GM12878 (cell line): ENCODE measurements at regions of chr6 and their contacts with region 1.

Region 1: DNA sequence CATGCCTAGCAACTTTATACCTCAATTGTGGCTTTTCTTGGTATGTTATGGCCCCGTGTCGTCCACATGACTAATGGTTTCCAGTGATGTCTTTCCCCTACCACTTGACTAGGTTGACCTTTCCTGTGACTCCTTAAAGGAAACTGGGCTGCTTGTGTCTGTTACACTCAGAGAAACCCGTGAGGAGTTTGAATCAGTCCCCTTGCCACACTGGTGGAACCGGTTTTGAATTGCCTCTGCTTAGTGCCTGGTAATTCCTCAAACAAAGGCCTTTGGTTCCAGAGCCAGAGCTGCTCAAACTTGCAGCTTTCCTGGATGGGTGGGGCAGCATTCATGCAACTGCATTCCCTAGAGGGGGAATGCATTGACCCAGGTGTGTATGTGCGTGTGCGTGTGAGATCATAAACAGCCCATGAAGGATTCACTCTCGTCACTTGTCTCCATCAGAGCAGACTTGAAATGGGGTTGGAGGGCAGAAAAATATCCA is 22.0 kb downstream of the ECT2L start:
- DNase-seq: no peak
- ATAC-seq: peak; percentile 51
- H3K4me3 ChIP-seq: no peak overlapping the region
- H3K27ac ChIP-seq: no peak overlapping the region; the same call in 1 of the 2 replicates
- H3K4me1 ChIP-seq: peaks cover 18% of the 10 kb centered on the region
- H3K27me3 ChIP-seq: no peaks in the 10 kb centered on the region
- CTCF ChIP-seq: no peak
- EP300 ChIP-seq: no peak
- POLR2A ChIP-seq: no peak
- RAD21 ChIP-seq: no peak

Region 2: GRCh38 chr6:138622967-138623366 is 194.9 kb before region 1 on chr6:
- CTCF ChIA-PET with region 1: no interaction called
- POLR2A ChIA-PET with region 1: no interaction called
- RAD21 ChIA-PET with region 1: no interaction called
- SMC1A ChIA-PET with region 1: no interaction called
- in situ Hi-C with region 1: no loop called
- intact Hi-C with region 1: no loop called
- DNase-seq: no peak
- ATAC-seq: no peak
- H3K4me3 ChIP-seq: no peak overlapping the region
- H3K27ac ChIP-seq: no peak overlapping the region
- H3K4me1 ChIP-seq: no peaks in the 10 kb centered on the region
- H3K27me3 ChIP-seq: no peaks in the 10 kb centered on the region
- CTCF ChIP-seq: no peak
- EP300 ChIP-seq: no peak
- POLR2A ChIP-seq: no peak
- RAD21 ChIP-seq: no peak

Region 3: DNA sequence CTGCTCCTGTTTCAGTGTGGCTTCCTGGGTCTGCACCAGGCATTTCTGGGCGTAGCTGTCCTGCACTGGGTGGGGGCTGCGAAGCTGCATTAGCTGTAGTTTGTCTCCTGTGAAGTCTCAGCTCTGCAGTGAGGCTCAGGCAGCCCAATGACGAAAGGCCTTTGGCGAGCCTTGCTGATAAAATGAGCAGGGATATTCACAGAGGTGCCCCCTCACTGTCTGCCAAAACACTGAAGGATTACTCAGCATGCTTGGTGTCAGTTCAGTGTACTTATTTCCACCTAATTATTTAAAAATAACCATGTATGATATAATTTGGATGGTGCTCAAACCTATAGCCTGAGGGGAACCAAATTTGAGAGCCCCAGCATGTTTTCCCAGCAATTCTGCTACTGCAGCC is 51.5 kb after region 1 on chr6:
- CTCF ChIA-PET with region 1: interaction called, 3 read pairs
- POLR2A ChIA-PET with region 1: no interaction called
- RAD21 ChIA-PET with region 1: interaction called, 5 read pairs
- SMC1A ChIA-PET with region 1: interaction called, 10 read pairs
- in situ Hi-C with region 1: no loop called
- intact Hi-C with region 1: loop called (anchors 1 kb)
- DNase-seq: no peak
- ATAC-seq: no peak; the same call in 2 of the 3 replicates
- H3K4me3 ChIP-seq: no peak overlapping the region
- H3K27ac ChIP-seq: peak overlapping the region; percentile 34
- H3K4me1 ChIP-seq: peaks cover 21% of the 10 kb centered on the region
- H3K27me3 ChIP-seq: no peaks in the 10 kb centered on the region
- CTCF ChIP-seq: no peak
- EP300 ChIP-seq: no peak
- POLR2A ChIP-seq: no peak
- RAD21 ChIP-seq: no peak

Region 4: GRCh38 chr6:138891255-138891986 is 73.6 kb after region 1 on chr6:
- CTCF ChIA-PET with region 1: interaction called, 7 read pairs
- POLR2A ChIA-PET with region 1: no interaction called
- RAD21 ChIA-PET with region 1: interaction called, 10 read pairs
- SMC1A ChIA-PET with region 1: interaction called, 24 read pairs
- in situ Hi-C with region 1: no loop called
- intact Hi-C with region 1: no loop called
- DNase-seq: no peak
- ATAC-seq: no peak
- H3K4me3 ChIP-seq: no peak overlapping the region
- H3K27ac ChIP-seq: no peak overlapping the region
- H3K4me1 ChIP-seq: peaks cover 12% of the 10 kb centered on the region
- H3K27me3 ChIP-seq: no peaks in the 10 kb centered on the region
- CTCF ChIP-seq: no peak
- EP300 ChIP-seq: no peak
- POLR2A ChIP-seq: no peak
- RAD21 ChIP-seq: no peak

Region 5: GRCh38 chr6:138931660-138932059 is 113.8 kb after region 1 on chr6:
- CTCF ChIA-PET with region 1: interaction called, 21 read pairs
- POLR2A ChIA-PET with region 1: no interaction called
- RAD21 ChIA-PET with region 1: interaction called, 7 read pairs
- SMC1A ChIA-PET with region 1: interaction called, 16 read pairs
- in situ Hi-C with region 1: no loop called
- intact Hi-C with region 1: no loop called
- DNase-seq: no peak
- ATAC-seq: peak; percentile 69
- H3K4me3 ChIP-seq: no peak overlapping the region
- H3K27ac ChIP-seq: no peak overlapping the region
- H3K4me1 ChIP-seq: no peaks in the 10 kb centered on the region
- H3K27me3 ChIP-seq: no peaks in the 10 kb centered on the region
- CTCF ChIP-seq: no peak
- EP300 ChIP-seq: no peak
- POLR2A ChIP-seq: no peak
- RAD21 ChIP-seq: no peak

Region 6: DNA sequence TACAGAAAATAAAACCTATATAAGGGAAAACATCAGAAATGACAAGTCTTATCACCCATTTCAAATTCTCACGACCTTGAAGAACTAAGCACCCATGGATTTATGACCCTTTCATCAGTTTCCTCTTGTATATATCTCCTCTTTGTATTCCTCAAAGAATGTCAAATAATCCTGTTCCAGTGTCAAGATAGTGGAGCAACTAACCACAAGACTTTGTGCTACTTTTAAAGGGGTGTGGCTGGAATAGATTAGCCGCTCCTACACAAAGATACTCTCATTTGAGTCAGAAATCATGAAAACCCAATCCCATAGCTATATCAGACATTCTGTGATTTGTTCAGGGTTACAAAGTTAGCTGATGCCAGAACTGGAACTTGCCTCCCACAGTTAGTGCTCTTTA is 163.6 kb after region 1 on chr6:
- CTCF ChIA-PET with region 1: interaction called, 166 read pairs
- POLR2A ChIA-PET with region 1: interaction called, 3 read pairs
- RAD21 ChIA-PET with region 1: interaction called, 94 read pairs
- SMC1A ChIA-PET with region 1: interaction called, 163 read pairs
- in situ Hi-C with region 1: loop called (anchors 5 kb)
- intact Hi-C with region 1: no loop called
- DNase-seq: no peak
- ATAC-seq: no peak
- H3K4me3 ChIP-seq: no peak overlapping the region
- H3K27ac ChIP-seq: no peak overlapping the region
- H3K4me1 ChIP-seq: peaks cover 9% of the 10 kb centered on the region; the same call in 1 of the 2 replicates
- H3K27me3 ChIP-seq: no peaks in the 10 kb centered on the region
- CTCF ChIP-seq: no peak
- EP300 ChIP-seq: no peak
- POLR2A ChIP-seq: no peak
- RAD21 ChIP-seq: no peak

Region 7: GRCh38 chr6:139109558-139109957 is 291.7 kb after region 1 on chr6:
- CTCF ChIA-PET with region 1: interaction called, 11 read pairs
- POLR2A ChIA-PET with region 1: no interaction called
- RAD21 ChIA-PET with region 1: interaction called, 7 read pairs
- SMC1A ChIA-PET with region 1: interaction called, 3 read pairs
- in situ Hi-C with region 1: loop called (anchors 5 kb)
- intact Hi-C with region 1: loop called (anchors 1 kb)
- DNase-seq: no peak
- ATAC-seq: peak; percentile 89
- H3K4me3 ChIP-seq: no peak overlapping the region
- H3K27ac ChIP-seq: no peak overlapping the region
- H3K4me1 ChIP-seq: no peaks in the 10 kb centered on the region
- H3K27me3 ChIP-seq: no peaks in the 10 kb centered on the region; a peak in 1 of 4 replicates
- CTCF ChIP-seq: peak; percentile 36 to 54 (median 44); a peak in 5 of 6 replicates
- EP300 ChIP-seq: no peak
- POLR2A ChIP-seq: no peak
- RAD21 ChIP-seq: peak; percentile 67